Activated naive CD4-positive, alpha-beta T cell treated with anti-CD3 and anti-CD28 coated beads for 36 hours (primary cell): ENCODE measurements at regions of chr5 and their contacts with region 1.

Region 1: GRCh38 chr5:142888469-142889085 is 118.4 kb downstream of the ARHGAP26 start:
- DNase-seq: peak; percentile 15
- H3K4me3 Mint-ChIP-seq: no peak overlapping the region
- H3K27ac Mint-ChIP-seq: no peak overlapping the region
- H3K4me1 Mint-ChIP-seq: no peaks in the 10 kb centered on the region
- H3K27me3 Mint-ChIP-seq: no peaks in the 10 kb centered on the region

Region 2: GRCh38 chr5:142611154-142611553 is 277.4 kb before region 1 on chr5:
- CTCF ChIA-PET with region 1: interaction called, 5 read pairs
- intact Hi-C with region 1: loop called (anchors 10 kb)
- DNase-seq: peak; percentile 88
- H3K4me3 Mint-ChIP-seq: no peak overlapping the region
- H3K27ac Mint-ChIP-seq: no peak overlapping the region
- H3K4me1 Mint-ChIP-seq: no peaks in the 10 kb centered on the region
- H3K27me3 Mint-ChIP-seq: peaks cover 5% of the 10 kb centered on the region

Region 3: DNA sequence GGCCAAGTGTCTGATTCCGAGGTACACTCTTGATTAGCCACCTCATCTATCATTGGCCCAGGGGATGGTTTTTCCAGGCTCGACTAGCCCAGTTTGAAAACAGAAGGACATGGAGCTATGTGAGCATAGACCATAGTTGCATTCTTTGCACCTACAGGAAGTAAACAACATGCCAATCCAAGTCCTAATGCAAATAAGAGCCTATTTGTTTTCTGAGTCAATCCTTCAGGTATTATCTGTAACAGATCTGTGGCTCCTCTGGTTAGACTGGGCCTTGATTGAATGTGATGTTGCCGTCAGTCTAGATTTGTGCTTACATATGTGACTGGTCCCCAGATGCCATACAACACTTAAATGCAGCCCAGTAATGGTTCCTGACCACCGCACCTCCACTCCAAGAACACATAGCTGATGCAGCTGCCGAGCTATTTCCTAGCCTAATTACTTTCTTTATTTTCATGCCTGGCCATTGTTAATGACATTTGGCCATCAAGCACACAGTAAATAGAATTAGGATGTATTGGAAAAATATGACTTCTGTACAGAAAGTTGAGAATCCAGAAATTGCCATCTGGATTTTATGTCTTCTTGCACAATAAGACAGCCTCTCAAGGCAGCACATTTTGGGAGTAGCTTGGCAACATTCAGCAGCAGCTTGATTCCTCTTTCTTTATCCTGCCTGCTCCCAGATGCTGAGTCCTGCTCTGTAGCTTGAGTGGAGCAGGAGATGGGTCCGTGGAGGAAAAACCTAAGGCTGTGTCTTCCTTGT is 147.9 kb before region 1 on chr5:
- CTCF ChIA-PET with region 1: interaction called, 163 read pairs
- intact Hi-C with region 1: no loop called
- DNase-seq: no peak
- H3K4me3 Mint-ChIP-seq: no peak overlapping the region
- H3K27ac Mint-ChIP-seq: no peak overlapping the region
- H3K4me1 Mint-ChIP-seq: no peaks in the 10 kb centered on the region
- H3K27me3 Mint-ChIP-seq: peaks cover 4% of the 10 kb centered on the region

Region 4: DNA sequence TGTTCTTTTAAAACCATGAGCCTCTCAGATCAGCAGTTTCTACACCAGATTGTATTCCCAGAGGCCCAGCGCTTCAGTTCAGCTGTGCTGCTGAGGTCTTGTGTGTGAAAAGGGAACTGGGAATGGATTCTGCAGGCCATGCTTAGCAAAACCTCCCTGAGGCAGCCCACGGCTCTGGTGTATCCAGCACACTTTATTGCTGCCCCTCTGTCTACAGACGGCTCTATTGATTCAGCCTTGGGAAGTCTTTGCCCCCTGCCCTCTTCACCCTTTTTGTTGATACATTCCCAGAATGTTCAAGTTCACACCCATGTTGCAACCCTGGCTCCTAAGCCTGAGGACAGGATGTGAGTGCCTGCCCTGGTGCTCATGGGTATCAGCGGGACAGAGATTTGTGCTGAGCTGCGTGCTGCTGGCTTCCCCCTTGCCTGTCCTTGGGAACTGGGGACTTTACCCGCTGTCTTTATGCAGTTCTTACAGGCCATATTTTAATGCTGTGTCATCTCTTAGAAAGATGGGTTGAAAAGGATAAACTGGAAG is 81.1 kb before region 1 on chr5:
- CTCF ChIA-PET with region 1: no interaction called
- intact Hi-C with region 1: no loop called
- DNase-seq: no peak
- H3K4me3 Mint-ChIP-seq: no peak overlapping the region
- H3K27ac Mint-ChIP-seq: no peak overlapping the region
- H3K4me1 Mint-ChIP-seq: peaks cover 20% of the 10 kb centered on the region
- H3K27me3 Mint-ChIP-seq: no peaks in the 10 kb centered on the region

Region 5: DNA sequence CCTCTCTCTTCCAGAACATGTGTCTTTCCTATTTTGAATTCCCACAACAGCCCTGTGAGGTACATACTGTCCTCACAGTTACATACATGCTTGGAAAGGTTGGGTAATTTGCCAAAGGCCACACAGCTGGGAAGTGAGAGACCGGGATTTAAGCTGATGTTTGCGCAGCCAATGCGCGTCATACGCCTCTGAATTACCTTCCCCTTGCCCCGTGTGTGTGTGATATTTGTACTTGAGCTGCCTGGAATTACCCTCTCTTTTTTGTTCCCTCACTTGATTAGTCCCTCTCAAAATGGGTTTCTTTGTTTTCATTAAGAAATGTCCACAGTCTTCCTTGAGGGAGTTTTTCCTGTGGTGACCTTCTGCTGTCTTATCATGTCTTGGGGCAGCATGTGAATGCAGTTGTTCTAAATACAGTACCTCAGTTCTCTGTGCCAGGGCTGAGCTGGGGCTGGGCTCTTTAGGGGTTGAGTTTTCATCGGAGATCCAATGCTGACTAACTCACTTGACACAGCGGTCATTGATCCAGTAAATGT is 23.8 kb before region 1 on chr5:
- CTCF ChIA-PET with region 1: interaction called, 22 read pairs
- intact Hi-C with region 1: loop called (anchors 2 kb)
- DNase-seq: no peak
- H3K4me3 Mint-ChIP-seq: no peak overlapping the region
- H3K27ac Mint-ChIP-seq: peak overlapping the region; percentile 89
- H3K4me1 Mint-ChIP-seq: peaks cover 30% of the 10 kb centered on the region
- H3K27me3 Mint-ChIP-seq: no peaks in the 10 kb centered on the region

Region 6: DNA sequence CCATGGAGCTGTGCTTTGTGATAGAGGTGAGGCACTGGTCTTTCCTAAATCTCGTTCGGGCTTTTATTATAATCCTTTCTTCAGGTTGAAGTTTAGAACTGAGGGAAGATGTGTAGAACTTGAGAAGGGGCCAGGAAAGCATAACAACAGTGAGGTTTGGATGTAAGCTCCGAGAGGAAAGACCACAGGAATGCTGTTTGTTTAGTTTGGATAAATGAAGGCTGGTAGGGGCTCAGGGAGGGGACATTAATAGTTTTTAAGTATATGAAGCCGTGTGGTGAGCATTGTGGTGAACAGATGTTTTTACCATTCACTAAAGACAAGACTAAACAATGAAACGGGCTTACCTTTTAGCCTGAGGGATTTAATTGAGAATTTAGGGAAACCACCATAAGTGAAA is 12.3 kb after region 1 on chr5:
- CTCF ChIA-PET with region 1: interaction called, 11 read pairs
- intact Hi-C with region 1: no loop called
- DNase-seq: no peak
- H3K4me3 Mint-ChIP-seq: no peak overlapping the region
- H3K27ac Mint-ChIP-seq: no peak overlapping the region
- H3K4me1 Mint-ChIP-seq: no peaks in the 10 kb centered on the region
- H3K27me3 Mint-ChIP-seq: no peaks in the 10 kb centered on the region

Region 7: GRCh38 chr5:143319437-143320227 is 431.1 kb after region 1 on chr5:
- CTCF ChIA-PET with region 1: no interaction called
- intact Hi-C with region 1: no loop called
- DNase-seq: no peak
- H3K4me3 Mint-ChIP-seq: no peak overlapping the region
- H3K27ac Mint-ChIP-seq: no peak overlapping the region
- H3K4me1 Mint-ChIP-seq: peaks cover 60% of the 10 kb centered on the region
- H3K27me3 Mint-ChIP-seq: no peaks in the 10 kb centered on the region